GM12878 (cell line): ENCODE measurements at regions of chr18 and their contacts with region 1.

Region 1: DNA sequence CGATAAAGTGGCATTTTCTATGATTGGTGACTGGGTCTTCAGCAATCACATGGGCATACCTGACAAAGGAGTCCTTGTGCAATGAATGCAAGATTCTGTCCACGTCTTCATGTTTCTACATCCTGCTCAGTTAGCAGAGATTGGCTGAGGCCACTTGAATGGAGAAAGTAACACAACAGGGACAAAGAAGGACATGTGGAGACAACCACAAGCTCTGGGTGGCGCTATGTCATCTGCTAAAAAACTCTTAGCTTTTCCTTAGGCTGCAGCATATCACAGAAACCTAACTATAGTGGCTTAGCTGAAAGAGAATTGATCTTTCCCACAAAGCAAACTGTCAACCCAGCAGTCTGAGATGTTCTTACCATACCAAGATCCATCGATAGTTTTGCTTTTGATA is 1109.7 kb downstream of the SOCS6 start:
- DNase-seq: no peak
- ATAC-seq: no peak; the same call in 2 of the 3 replicates
- H3K4me3 ChIP-seq: no peak overlapping the region
- H3K27ac ChIP-seq: no peak overlapping the region
- H3K4me1 ChIP-seq: no peaks in the 10 kb centered on the region
- H3K27me3 ChIP-seq: no peaks in the 10 kb centered on the region
- CTCF ChIP-seq: peak in 1 of 3 experiments; percentile 30; a peak in 1 of 6 replicates
- EP300 ChIP-seq: no peak
- POLR2A ChIP-seq: no peak
- RAD21 ChIP-seq: no peak

Region 2: GRCh38 chr18:71327850-71328249 is 70.7 kb before region 1 on chr18:
- CTCF ChIA-PET with region 1: no interaction called
- POLR2A ChIA-PET with region 1: no interaction called
- RAD21 ChIA-PET with region 1: no interaction called
- SMC1A ChIA-PET with region 1: no interaction called
- in situ Hi-C with region 1: no loop called
- intact Hi-C with region 1: no loop called
- DNase-seq: no peak
- ATAC-seq: no peak
- H3K4me3 ChIP-seq: no peak overlapping the region
- H3K27ac ChIP-seq: no peak overlapping the region
- H3K4me1 ChIP-seq: no peaks in the 10 kb centered on the region
- H3K27me3 ChIP-seq: no peaks in the 10 kb centered on the region
- CTCF ChIP-seq: no peak
- EP300 ChIP-seq: no peak
- POLR2A ChIP-seq: no peak
- RAD21 ChIP-seq: no peak

Region 3: GRCh38 chr18:71388148-71388547 is 10.4 kb before region 1 on chr18:
- CTCF ChIA-PET with region 1: interaction called, 17 read pairs
- POLR2A ChIA-PET with region 1: no interaction called
- RAD21 ChIA-PET with region 1: interaction called, 5 read pairs
- SMC1A ChIA-PET with region 1: no interaction called
- in situ Hi-C with region 1: no loop called
- intact Hi-C with region 1: no loop called
- DNase-seq: no peak
- ATAC-seq: no peak
- H3K4me3 ChIP-seq: no peak overlapping the region
- H3K27ac ChIP-seq: no peak overlapping the region
- H3K4me1 ChIP-seq: no peaks in the 10 kb centered on the region
- H3K27me3 ChIP-seq: no peaks in the 10 kb centered on the region
- CTCF ChIP-seq: no peak
- EP300 ChIP-seq: no peak
- POLR2A ChIP-seq: no peak
- RAD21 ChIP-seq: no peak

Region 4: GRCh38 chr18:71442731-71443141 is 44.2 kb after region 1 on chr18:
- CTCF ChIA-PET with region 1: no interaction called
- POLR2A ChIA-PET with region 1: no interaction called
- RAD21 ChIA-PET with region 1: no interaction called
- SMC1A ChIA-PET with region 1: no interaction called
- in situ Hi-C with region 1: no loop called
- intact Hi-C with region 1: no loop called
- DNase-seq: no peak
- ATAC-seq: no peak
- H3K4me3 ChIP-seq: no peak overlapping the region
- H3K27ac ChIP-seq: no peak overlapping the region
- H3K4me1 ChIP-seq: no peaks in the 10 kb centered on the region
- H3K27me3 ChIP-seq: no peaks in the 10 kb centered on the region
- CTCF ChIP-seq: no peak
- EP300 ChIP-seq: no peak
- POLR2A ChIP-seq: no peak
- RAD21 ChIP-seq: no peak